ENCODE measurements at regions of chr2 and their contacts with region 1.

Region 1: GRCh38 chr2:229438430-229439159 is 167.5 kb upstream of the PID1 start:
- DNase-seq: no peak
- H3K4me3 ChIP-seq: no peak overlapping the region
- H3K27ac ChIP-seq: no peak overlapping the region
- H3K27me3 ChIP-seq: no peaks in the 10 kb centered on the region
- CTCF ChIP-seq: no peak

Region 2: GRCh38 chr2:229257985-229258384 is 180.6 kb before region 1 on chr2:
- intact Hi-C with region 1: no loop called
- DNase-seq: no peak
- H3K4me3 ChIP-seq: no peak overlapping the region
- H3K27ac ChIP-seq: no peak overlapping the region
- H3K27me3 ChIP-seq: no peaks in the 10 kb centered on the region
- CTCF ChIP-seq: no peak

Region 3: GRCh38 chr2:229501051-229501794 is 62.6 kb after region 1 on chr2:
- intact Hi-C with region 1: loop called in 1 of 2 experiments (anchors 5 kb)
- DNase-seq: no peak
- H3K4me3 ChIP-seq: no peak overlapping the region
- H3K27ac ChIP-seq: peak overlapping the region in 42 of 59 donors; percentile 3 to 87 (median 48)
- H3K27me3 ChIP-seq: no peaks in the 10 kb centered on the region
- CTCF ChIP-seq: no peak